ENCODE measurements at regions of chr1 and their contacts with region 1.

Region 1: DNA sequence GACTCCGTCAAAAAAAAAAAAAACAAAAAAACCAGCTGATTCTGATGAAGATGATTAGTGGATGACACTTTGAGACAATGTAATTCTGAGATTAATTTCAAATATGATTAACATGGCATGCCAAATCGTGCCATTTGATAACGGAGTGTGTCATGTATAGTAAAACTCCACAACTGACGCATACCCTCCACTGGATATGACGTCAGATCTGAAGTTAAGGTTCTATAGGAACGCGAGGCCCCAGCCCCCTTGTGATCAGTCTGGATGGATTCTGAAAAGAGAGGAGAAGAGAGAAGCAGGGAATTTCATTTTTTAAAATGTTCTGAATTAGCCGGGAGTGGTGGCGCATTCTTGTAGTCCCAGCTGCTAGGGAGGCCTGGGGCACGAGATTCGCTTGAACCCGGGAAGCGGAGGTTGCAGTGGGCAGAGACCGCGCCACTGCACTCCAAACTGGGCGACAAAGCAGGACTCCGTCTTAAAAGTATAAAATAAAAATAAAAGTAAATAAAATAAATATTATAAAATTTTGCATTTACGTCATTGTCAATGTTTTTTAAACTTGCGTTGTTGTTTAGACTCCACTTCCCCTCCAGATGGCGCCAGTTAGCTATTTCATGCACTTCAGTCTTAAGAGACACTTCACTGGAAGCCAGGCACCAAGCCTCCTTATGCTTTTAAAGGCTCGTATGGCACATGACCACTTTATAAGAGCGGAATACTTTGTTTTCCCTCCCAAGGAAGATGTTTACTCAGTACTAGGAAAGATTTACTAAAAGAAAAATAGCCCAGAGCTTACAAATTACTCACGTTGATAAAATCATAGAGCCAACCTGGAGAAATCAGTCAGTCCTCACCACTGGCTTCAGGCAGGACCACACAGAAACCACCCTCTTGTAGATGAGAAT is 65.5 kb downstream of the UBE2U start:
- DNase-seq: peak; percentile 55
- ATAC-seq: peak; percentile 54; the same call in 2 of the 3 replicates
- H3K4me3 ChIP-seq: no peak overlapping the region
- H3K27ac ChIP-seq: no peak overlapping the region
- H3K4me1 ChIP-seq: no peaks in the 10 kb centered on the region
- H3K27me3 ChIP-seq: peaks cover 0 to 10% of the 10 kb centered on the region in 2 experiments; a peak in 2 of 5 replicates
- CTCF ChIP-seq: peak; percentile 70
- EP300 ChIP-seq: no peak
- POLR2A ChIP-seq: no peak
- RAD21 ChIP-seq: 0 out of 2 replicates have a peak, but pooled peaks have one; percentile 23

Region 2: GRCh38 chr1:64199154-64199553 is 69.8 kb before region 1 on chr1:
- CTCF ChIA-PET with region 1: no interaction called
- POLR2A ChIA-PET with region 1: no interaction called
- in situ Hi-C with region 1: no loop called
- intact Hi-C with region 1: no loop called
- DNase-seq: no peak
- ATAC-seq: no peak
- H3K4me3 ChIP-seq: no peak overlapping the region
- H3K27ac ChIP-seq: no peak overlapping the region
- H3K4me1 ChIP-seq: no peaks in the 10 kb centered on the region
- H3K27me3 ChIP-seq: peaks cover 0 to 5% of the 10 kb centered on the region in 2 experiments; a peak in 1 of 5 replicates
- CTCF ChIP-seq: no peak
- EP300 ChIP-seq: no peak
- POLR2A ChIP-seq: no peak
- RAD21 ChIP-seq: no peak

Region 3: GRCh38 chr1:64675718-64676345 is 406.9 kb after region 1 on chr1:
- CTCF ChIA-PET with region 1: interaction called, 12 read pairs
- POLR2A ChIA-PET with region 1: no interaction called
- in situ Hi-C with region 1: loop called (anchors 10 kb)
- intact Hi-C with region 1: loop called (anchors 1 kb)
- DNase-seq: peak; percentile 3
- ATAC-seq: no peak
- H3K4me3 ChIP-seq: no peak overlapping the region
- H3K27ac ChIP-seq: no peak overlapping the region
- H3K4me1 ChIP-seq: no peaks in the 10 kb centered on the region
- H3K27me3 ChIP-seq: peaks cover 1 to 3% of the 10 kb centered on the region in 2 experiments; a peak in 1 of 5 replicates
- CTCF ChIP-seq: peak; percentile 43; the same call in 1 of the 2 replicates
- EP300 ChIP-seq: no peak
- POLR2A ChIP-seq: no peak
- RAD21 ChIP-seq: no peak

Region 4: GRCh38 chr1:64823691-64824476 is 555.0 kb after region 1 on chr1:
- CTCF ChIA-PET with region 1: interaction called, 7 read pairs
- POLR2A ChIA-PET with region 1: no interaction called
- in situ Hi-C with region 1: loop called (anchors 5 kb)
- intact Hi-C with region 1: no loop called
- DNase-seq: peak; percentile 69
- ATAC-seq: peak; percentile 65
- H3K4me3 ChIP-seq: no peak overlapping the region
- H3K27ac ChIP-seq: no peak overlapping the region
- H3K4me1 ChIP-seq: peaks cover 9% of the 10 kb centered on the region
- H3K27me3 ChIP-seq: no peaks in the 10 kb centered on the region
- CTCF ChIP-seq: peak; percentile 89
- EP300 ChIP-seq: no peak
- POLR2A ChIP-seq: no peak
- RAD21 ChIP-seq: peak; percentile 81